ENCODE measurements at regions of chr15 and their contacts with region 1.

Region 1: DNA sequence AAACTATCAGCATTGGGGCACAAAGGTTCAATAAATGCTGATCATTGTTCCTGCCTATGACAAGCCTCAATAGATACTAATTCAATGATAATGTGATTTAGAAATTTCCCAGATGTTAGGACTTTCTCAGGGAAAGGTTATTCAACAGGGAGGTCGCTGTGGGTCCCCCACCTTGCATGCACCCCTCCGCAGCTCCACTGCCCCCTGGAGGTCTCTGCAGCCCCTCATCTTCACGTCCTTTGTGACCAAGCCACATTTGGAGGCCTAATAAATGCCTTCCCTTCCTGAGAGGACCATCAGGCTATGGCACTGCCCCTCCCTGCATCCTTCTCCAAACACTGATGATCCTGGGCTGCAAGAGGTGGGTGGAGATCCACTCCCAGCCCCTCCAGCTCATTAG is 50.2 kb downstream of the NOX5 start:
- DNase-seq: no peak
- ATAC-seq: no peak
- H3K4me3 ChIP-seq: no peak overlapping the region
- H3K27ac ChIP-seq: no peak overlapping the region
- H3K4me1 ChIP-seq: peaks cover 0 to 17% (median 14%) of the 10 kb centered on the region in 9 donors
- H3K27me3 ChIP-seq: no peaks in the 10 kb centered on the region
- CTCF ChIP-seq: no peak

Region 2: DNA sequence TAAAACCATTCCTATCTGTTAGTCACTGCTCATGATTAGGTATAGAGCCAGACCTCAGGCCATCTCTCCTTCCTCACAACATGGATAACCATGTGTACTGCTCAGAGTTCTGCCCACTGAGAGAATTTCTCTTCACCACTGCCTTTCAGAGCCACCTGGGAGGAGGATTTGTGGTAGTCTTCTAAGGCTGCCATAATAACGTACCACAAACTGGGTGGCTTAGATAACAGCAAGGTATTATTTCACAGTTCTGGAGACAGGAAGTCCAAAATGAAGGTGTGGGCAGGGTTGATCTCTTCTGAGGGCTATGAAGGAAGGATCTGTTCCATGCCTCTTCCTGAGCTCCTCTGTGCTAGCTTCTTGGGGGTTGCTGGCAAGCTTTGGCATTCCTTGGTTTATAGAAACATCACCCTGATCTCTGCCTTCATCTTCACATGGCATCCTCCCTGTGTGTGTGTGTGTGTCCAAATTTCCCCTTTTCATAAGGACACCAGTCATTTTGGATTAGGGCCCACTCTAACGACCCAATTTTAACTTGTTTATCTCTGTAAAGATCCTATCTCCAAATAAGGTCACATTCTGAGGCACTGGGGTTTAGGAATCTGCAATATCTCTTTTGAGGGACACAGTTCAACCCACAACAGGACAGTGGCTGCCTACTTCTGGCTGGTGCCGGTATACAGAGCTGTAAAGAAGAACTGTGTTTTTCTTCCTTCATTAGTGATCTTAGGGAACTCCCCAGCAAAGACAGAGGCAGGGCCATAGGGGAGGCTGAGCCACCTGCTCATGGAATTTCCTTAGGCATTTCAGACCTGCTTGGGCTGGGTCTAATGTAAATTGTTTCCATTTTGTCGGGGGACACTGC is 92.2 kb before region 1 on chr15:
- intact Hi-C with region 1: no loop called
- DNase-seq: no peak
- ATAC-seq: no peak
- H3K4me3 ChIP-seq: no peak overlapping the region
- H3K27ac ChIP-seq: no peak overlapping the region
- H3K4me1 ChIP-seq: no peaks in the 10 kb centered on the region
- H3K27me3 ChIP-seq: peaks cover 0 to 4% (median 0%) of the 10 kb centered on the region in 7 donors
- CTCF ChIP-seq: no peak

Region 3: DNA sequence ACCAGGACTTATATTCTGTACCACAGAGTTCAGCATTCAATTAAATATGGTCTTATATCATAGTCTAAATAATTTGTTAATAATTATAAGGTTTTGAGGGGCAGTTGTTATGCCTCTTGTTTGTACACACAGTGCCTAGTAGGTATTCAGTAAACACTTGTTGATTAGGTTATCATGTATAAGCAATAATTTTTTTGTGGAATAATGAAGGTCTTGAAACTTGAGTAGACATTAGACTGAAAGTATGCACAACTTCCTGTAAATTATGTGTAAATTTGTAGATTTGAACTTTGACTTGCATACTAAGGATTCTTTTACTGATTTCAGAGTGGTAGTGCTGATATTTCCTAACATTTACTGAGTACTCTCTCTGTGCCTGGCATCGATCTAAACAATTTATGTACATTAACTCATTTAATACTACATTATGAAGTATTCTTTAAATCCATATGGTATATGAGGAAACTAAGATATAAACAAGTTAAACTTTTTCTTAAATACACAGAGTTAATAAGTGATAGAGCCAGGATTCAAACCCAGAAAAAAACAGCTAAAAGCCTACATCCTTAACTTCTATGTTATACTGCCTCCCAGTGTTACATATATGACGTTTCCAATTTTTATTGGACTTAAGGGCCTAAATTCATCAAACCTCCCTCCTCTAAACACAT is 160.8 kb after region 1 on chr15:
- intact Hi-C with region 1: loop called in 9 of 10 experiments (anchors 1 to 10 kb)
- DNase-seq: no peak
- ATAC-seq: peak in 1 of 8 donors; percentile 42
- H3K4me3 ChIP-seq: no peak overlapping the region
- H3K27ac ChIP-seq: no peak overlapping the region
- H3K4me1 ChIP-seq: peaks cover 0 to 19% (median 0%) of the 10 kb centered on the region in 9 donors
- H3K27me3 ChIP-seq: no peaks in the 10 kb centered on the region
- CTCF ChIP-seq: peak in 8 of 9 donors; percentile 15 to 57 (median 38)

Region 4: GRCh38 chr15:69237718-69238117 is 173.1 kb after region 1 on chr15:
- intact Hi-C with region 1: no loop called
- DNase-seq: no peak
- ATAC-seq: no peak
- H3K4me3 ChIP-seq: no peak overlapping the region
- H3K27ac ChIP-seq: no peak overlapping the region
- H3K4me1 ChIP-seq: no peaks in the 10 kb centered on the region
- H3K27me3 ChIP-seq: no peaks in the 10 kb centered on the region
- CTCF ChIP-seq: no peak